ENCODE measurements at regions of chr2 and their contacts with region 1.

Region 1: DNA sequence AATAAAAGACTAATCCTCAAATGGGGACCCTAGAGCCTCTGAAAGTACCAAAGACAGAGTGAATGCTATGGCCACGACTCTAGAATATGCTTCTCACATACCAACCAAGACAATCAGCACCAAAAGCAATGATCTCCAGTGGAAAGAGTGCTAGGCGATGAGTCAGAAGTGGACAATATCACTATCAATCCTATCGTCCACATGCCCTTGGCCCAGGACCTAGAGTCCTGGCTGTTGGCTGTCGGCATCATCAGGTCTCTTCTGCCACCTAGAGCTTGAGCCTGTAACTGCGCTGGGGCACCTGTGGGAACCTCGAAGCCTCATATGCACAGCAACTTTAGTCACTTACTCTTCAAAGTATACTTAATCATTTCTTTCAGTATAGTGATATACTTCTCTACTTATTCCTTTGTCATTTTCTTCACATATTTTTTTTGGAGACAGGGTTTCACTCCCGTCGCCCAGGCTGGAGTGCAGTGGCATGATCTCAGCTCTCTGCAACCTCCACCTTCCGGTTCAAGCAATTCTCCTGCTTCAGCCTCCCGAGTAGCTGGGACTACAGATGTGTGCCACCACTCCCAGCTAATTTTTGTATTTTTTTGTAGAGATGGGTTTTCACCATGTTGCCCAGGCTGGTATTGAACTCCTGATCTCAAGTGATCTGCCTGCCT is 29.7 kb downstream of the NOL10 start:
- DNase-seq: peak in 5 of 9 experiments; percentile 13 to 36 (median 33)
- ATAC-seq: peak; percentile 46
- H3K4me3 ChIP-seq: no peak overlapping the region
- H3K4me3 Mint-ChIP-seq: no peak overlapping the region
- H3K27ac ChIP-seq: no peak overlapping the region
- H3K27ac Mint-ChIP-seq: no peak overlapping the region
- H3K4me1 ChIP-seq: no peaks in the 10 kb centered on the region
- H3K4me1 Mint-ChIP-seq: peaks cover 8% of the 10 kb centered on the region
- H3K27me3 ChIP-seq: no peaks in the 10 kb centered on the region
- H3K27me3 Mint-ChIP-seq: no peaks in the 10 kb centered on the region
- CTCF ChIP-seq: peak; percentile 29

Region 2: DNA sequence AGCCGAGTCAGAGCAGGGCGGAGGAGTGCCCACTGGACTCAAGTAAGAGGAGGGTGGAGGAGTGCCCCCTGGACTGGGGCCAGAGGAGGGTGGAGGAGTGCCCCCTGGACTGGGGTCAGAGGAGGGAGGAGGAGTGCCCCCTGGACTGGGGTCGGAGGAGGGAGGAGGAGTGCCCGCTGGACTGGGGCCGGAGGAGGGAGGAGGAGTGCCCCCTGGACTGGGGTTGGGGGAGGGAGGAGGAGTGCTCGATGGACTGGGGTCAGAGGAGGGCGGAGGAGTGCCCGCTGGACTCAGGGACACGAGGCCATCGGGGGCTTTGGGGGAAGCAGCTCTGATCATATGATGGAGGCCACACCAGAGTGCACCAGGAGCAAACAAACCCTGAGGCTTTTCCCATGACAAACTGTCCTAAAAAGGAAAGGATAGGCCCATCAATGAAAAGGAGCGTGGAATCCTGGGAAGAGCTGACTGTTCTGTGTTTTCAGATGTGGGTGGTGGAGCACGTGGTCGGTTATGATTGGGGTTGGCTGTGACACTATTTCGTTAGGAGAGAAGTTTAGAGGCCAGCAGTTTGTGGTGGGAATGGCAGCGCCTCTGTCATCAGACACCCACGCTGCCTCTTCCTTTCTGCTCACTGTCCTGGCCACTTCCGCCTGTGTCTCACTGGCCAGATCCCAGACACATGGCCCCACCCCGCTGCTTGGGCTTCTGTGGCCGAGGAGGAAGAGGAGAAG is 381.8 kb before region 1 on chr2:
- CTCF ChIA-PET with region 1: no interaction called
- POLR2A ChIA-PET with region 1: no interaction called
- intact Hi-C with region 1: loop called (anchors 5 to 10 kb)
- DNase-seq: peak in 2 of 9 experiments; percentile 38 to 56
- ATAC-seq: peak; percentile 40
- H3K4me3 ChIP-seq: no peak overlapping the region
- H3K4me3 Mint-ChIP-seq: no peak overlapping the region
- H3K27ac ChIP-seq: peak overlapping the region in 1 of 2 experiments; percentile 29
- H3K27ac Mint-ChIP-seq: no peak overlapping the region
- H3K4me1 ChIP-seq: peaks cover 10% of the 10 kb centered on the region
- H3K4me1 Mint-ChIP-seq: peaks cover 12% of the 10 kb centered on the region
- H3K27me3 ChIP-seq: no peaks in the 10 kb centered on the region
- H3K27me3 Mint-ChIP-seq: no peaks in the 10 kb centered on the region
- CTCF ChIP-seq: no peak

Region 3: GRCh38 chr2:11305958-11306357 is 645.9 kb after region 1 on chr2:
- CTCF ChIA-PET with region 1: no interaction called
- POLR2A ChIA-PET with region 1: no interaction called
- intact Hi-C with region 1: no loop called
- DNase-seq: no peak
- ATAC-seq: no peak
- H3K4me3 ChIP-seq: no peak overlapping the region
- H3K4me3 Mint-ChIP-seq: no peak overlapping the region
- H3K27ac ChIP-seq: no peak overlapping the region
- H3K27ac Mint-ChIP-seq: no peak overlapping the region
- H3K4me1 ChIP-seq: no peaks in the 10 kb centered on the region
- H3K4me1 Mint-ChIP-seq: peaks cover 14% of the 10 kb centered on the region
- H3K27me3 ChIP-seq: no peaks in the 10 kb centered on the region
- H3K27me3 Mint-ChIP-seq: no peaks in the 10 kb centered on the region
- CTCF ChIP-seq: no peak